Activated CD8-positive, alpha-beta T cell treated with anti-CD3 and anti-CD28 coated beads for 36 hours (primary cell): ENCODE measurements at regions of chr17 and their contacts with region 1.

Region 1: GRCh38 chr17:39174907-39175694 is 9.1 kb upstream of the ARL5C start:
- DNase-seq: peak; percentile 92
- ATAC-seq: peak; percentile 84
- H3K4me3 Mint-ChIP-seq: no peak overlapping the region
- H3K27ac Mint-ChIP-seq: no peak overlapping the region
- H3K4me1 Mint-ChIP-seq: peaks cover 10% of the 10 kb centered on the region
- H3K27me3 Mint-ChIP-seq: no peaks in the 10 kb centered on the region
- CTCF ChIP-seq: peak; percentile 91

Region 2: DNA sequence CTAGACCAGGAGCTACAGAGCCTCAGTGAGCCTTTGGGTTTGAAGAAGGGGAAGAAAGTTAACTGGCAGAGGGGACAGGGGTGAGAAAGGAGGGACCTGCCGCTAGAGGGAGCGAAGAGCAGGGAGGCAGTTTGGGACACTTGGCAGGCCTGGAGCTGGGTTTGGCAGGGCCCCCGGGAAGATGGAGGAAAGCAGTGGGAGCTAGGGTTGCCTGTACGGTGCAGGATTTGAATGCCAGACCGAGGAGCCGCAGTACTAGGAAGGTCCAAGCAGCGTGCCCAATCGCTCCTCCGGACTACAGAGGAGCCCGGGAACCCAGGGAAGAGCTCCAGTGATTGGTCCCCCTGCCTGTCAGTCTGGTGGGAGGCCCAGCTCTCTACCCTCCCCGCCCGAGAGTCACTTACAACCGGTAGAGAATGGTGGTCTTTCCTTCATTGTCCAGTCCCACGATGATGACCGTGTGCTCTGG is 10.4 kb before region 1 on chr17:
- CTCF ChIA-PET with region 1: interaction called, 151 read pairs
- POLR2A ChIA-PET with region 1: interaction called, 11 read pairs
- intact Hi-C with region 1: no loop called
- DNase-seq: peak; percentile 90
- ATAC-seq: peak; percentile 97
- H3K4me3 Mint-ChIP-seq: peak overlapping the region; percentile 79
- H3K27ac Mint-ChIP-seq: peak overlapping the region; percentile 55
- H3K4me1 Mint-ChIP-seq: peaks cover 14% of the 10 kb centered on the region
- H3K27me3 Mint-ChIP-seq: peaks cover 12% of the 10 kb centered on the region
- CTCF ChIP-seq: peak; percentile 91

Region 3: GRCh38 chr17:39194089-39194984 is 19.2 kb after region 1 on chr17:
- CTCF ChIA-PET with region 1: interaction called, 27 read pairs
- POLR2A ChIA-PET with region 1: interaction called, 6 read pairs
- intact Hi-C with region 1: no loop called
- DNase-seq: no peak
- ATAC-seq: no peak
- H3K4me3 Mint-ChIP-seq: no peak overlapping the region
- H3K27ac Mint-ChIP-seq: no peak overlapping the region
- H3K4me1 Mint-ChIP-seq: peaks cover 22% of the 10 kb centered on the region
- H3K27me3 Mint-ChIP-seq: no peaks in the 10 kb centered on the region
- CTCF ChIP-seq: no peak

Region 4: DNA sequence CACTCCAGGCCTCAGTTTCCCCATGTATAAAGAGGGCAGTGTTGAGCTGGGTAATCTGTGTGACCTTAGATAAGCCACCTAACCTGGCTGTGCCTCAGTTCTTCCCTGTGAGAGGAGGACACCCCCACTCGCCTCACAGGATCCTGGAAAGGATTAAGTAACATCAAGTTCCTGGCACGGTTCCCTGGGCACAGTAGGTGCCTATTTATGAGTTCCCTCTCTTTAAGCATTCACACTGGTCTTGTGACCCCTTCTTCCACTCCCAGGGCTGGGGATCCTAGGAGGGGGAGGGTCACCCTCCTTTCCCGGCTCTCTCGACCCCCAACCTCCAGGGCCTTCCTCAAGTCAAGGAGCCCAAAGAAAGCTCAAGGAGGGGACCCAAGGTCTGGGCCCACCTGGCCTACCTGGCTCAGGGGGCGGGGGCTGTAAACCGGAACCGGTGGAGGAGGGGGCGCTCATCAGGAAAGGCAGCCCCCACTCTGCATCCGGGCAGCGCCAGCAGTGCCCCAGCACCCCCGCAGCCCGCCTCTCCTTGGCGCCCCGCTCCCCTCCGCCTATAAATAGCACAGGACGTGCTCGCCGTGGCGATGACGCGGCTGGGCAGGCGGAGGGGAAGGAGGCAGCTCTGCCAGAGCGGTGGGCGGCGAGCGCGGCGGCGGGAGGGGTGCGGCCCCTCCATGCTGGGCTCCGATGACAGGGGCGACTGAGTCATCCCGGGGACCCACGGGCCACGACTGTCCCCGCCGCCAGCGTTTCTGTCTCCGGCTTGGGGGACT is 34.4 kb after region 1 on chr17:
- CTCF ChIA-PET with region 1: interaction called, 10 read pairs
- POLR2A ChIA-PET with region 1: interaction called, 3 read pairs
- intact Hi-C with region 1: no loop called
- DNase-seq: peak; percentile 92
- ATAC-seq: peak; percentile 86
- H3K4me3 Mint-ChIP-seq: peak overlapping the region; percentile 44
- H3K27ac Mint-ChIP-seq: peak overlapping the region; percentile 77
- H3K4me1 Mint-ChIP-seq: peaks cover 38% of the 10 kb centered on the region
- H3K27me3 Mint-ChIP-seq: no peaks in the 10 kb centered on the region
- CTCF ChIP-seq: no peak

Region 5: GRCh38 chr17:39244600-39245570 is 69.8 kb after region 1 on chr17:
- CTCF ChIA-PET with region 1: interaction called, 20 read pairs
- POLR2A ChIA-PET with region 1: interaction called, 3 read pairs
- intact Hi-C with region 1: no loop called
- DNase-seq: peak; percentile 96
- ATAC-seq: peak; percentile 96
- H3K4me3 Mint-ChIP-seq: no peak overlapping the region
- H3K27ac Mint-ChIP-seq: no peak overlapping the region
- H3K4me1 Mint-ChIP-seq: peaks cover 13% of the 10 kb centered on the region
- H3K27me3 Mint-ChIP-seq: no peaks in the 10 kb centered on the region
- CTCF ChIP-seq: peak; percentile 97